MCF 10A (cell line): ENCODE measurements at regions of chrX and their contacts with region 1.

Region 1: DNA sequence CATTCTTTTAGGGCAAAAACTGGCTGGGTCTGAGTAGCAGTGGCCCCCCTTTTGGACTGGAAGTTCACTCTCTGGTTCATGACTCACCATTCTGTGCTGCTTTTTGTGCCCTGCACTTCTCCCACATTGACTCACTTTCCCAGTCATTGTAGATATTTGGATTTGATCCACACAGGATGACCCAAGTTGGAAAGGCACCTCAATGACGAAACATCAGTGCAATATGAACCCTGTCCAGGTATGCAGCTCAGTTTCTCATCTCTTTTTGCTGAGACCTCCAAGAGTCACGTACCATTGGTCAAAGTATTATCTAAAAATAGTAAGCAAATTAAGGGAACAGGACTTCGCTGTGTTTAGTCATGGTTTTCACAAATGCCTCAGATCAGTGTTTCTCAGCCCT is 92.7 kb downstream of the CBLL2 start:
- DNase-seq: peak; percentile 96
- H3K4me3 Mint-ChIP-seq: peak overlapping the region; percentile 38
- H3K27ac Mint-ChIP-seq: peak overlapping the region; percentile 83
- H3K4me1 Mint-ChIP-seq: peaks cover 9% of the 10 kb centered on the region
- H3K27me3 Mint-ChIP-seq: peaks cover 57% of the 10 kb centered on the region
- CTCF ChIP-seq: no peak

Region 2: DNA sequence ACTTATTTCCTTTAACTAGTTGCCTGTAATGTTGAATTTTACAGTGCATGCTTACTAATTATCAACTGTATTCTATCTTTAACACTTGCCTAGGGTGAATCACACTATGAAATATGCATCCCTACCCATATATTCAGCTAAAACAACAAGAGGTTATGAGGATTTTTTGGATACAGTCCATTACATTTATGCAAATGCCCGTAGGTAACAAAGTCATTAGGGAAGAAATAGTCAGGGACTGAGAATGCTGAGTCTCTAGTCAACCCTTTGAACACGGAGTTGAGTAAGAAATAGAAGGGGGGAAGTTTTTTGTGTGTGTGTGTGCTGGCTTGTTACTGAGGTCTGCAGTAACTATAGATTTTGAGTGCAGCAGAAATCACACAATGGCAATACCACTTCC is 118.8 kb before region 1 on chrX:
- CTCF ChIA-PET with region 1: interaction called, 3 read pairs
- POLR2A ChIA-PET with region 1: no interaction called
- intact Hi-C with region 1: loop called (anchors 1 kb)
- DNase-seq: peak; percentile 74
- H3K4me3 Mint-ChIP-seq: no peak overlapping the region
- H3K27ac Mint-ChIP-seq: no peak overlapping the region
- H3K4me1 Mint-ChIP-seq: peaks cover 11% of the 10 kb centered on the region
- H3K27me3 Mint-ChIP-seq: peaks cover 51% of the 10 kb centered on the region
- CTCF ChIP-seq: no peak

Region 3: DNA sequence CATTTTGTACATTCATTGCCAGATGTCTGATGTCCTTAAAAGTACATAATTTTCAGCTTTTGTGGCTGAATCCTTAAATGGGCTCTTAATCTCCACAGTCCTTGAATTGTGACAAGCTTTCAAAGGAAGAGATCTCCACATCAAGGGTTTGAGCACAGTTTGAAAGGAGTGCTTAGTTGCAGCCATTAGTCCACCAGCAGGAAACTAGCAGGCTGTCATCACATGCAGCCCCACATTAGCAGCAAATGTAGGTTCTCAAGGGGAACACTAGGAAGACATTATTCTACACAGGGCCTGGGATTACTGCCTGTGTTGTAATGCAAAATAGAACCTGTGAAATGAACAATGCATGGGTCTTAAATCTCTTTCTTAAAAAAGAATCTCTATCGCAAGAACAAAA is 80.4 kb after region 1 on chrX:
- CTCF ChIA-PET with region 1: no interaction called
- POLR2A ChIA-PET with region 1: no interaction called
- intact Hi-C with region 1: no loop called
- DNase-seq: no peak
- H3K4me3 Mint-ChIP-seq: no peak overlapping the region
- H3K27ac Mint-ChIP-seq: no peak overlapping the region
- H3K4me1 Mint-ChIP-seq: no peaks in the 10 kb centered on the region
- H3K27me3 Mint-ChIP-seq: peaks cover 54% of the 10 kb centered on the region
- CTCF ChIP-seq: no peak

Region 4: DNA sequence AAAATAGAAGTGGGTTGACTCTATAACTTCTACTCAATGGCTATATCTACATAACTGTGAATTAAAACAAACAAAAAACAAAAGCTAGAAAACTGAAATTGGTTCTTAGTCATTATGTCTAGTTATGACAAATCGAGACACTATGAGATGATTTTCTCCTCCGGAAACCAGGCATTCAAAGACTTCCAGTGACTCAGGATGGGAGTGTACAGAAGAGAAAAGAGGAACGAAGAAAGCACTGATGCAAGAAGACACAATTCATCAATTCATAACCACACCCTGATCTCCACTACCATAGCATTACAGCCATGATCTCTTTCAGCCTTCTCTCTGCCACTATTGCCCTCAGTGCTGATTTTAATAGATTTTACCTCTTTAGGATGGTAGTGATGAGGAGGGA is 160.9 kb after region 1 on chrX:
- CTCF ChIA-PET with region 1: no interaction called
- POLR2A ChIA-PET with region 1: no interaction called
- intact Hi-C with region 1: loop called (anchors 1 kb)
- DNase-seq: peak; percentile 76
- H3K4me3 Mint-ChIP-seq: no peak overlapping the region
- H3K27ac Mint-ChIP-seq: peak overlapping the region; percentile 63
- H3K4me1 Mint-ChIP-seq: peaks cover 8% of the 10 kb centered on the region
- H3K27me3 Mint-ChIP-seq: peaks cover 25% of the 10 kb centered on the region
- CTCF ChIP-seq: no peak

Region 5: GRCh38 chrX:22559506-22559905 is 194.0 kb after region 1 on chrX:
- CTCF ChIA-PET with region 1: no interaction called
- POLR2A ChIA-PET with region 1: no interaction called
- intact Hi-C with region 1: no loop called
- DNase-seq: no peak
- H3K4me3 Mint-ChIP-seq: no peak overlapping the region
- H3K27ac Mint-ChIP-seq: no peak overlapping the region
- H3K4me1 Mint-ChIP-seq: no peaks in the 10 kb centered on the region
- H3K27me3 Mint-ChIP-seq: peaks cover 58% of the 10 kb centered on the region
- CTCF ChIP-seq: no peak